ENCODE measurements at regions of chr10 and their contacts with region 1.

Region 1: DNA sequence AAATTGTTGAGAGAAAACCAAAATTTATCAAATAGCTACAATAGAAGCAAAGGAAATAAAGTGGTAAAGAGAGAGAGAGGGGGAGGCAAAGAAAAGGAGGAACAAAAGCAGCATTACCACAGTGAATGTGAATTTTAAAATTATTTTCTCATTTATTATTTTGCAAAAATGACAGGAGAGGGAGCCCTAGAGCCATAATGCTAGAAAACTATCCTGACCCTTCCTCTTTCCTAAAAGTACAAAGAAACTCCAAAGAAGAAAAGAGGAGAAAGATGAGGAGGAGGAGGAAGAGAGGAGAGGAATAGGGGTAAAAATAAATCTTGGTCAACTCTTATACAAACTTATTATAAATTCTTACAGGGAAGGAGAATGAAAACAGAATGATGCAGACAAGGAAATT is 921.5 kb downstream of the NRG3 start:
- DNase-seq: peak; percentile 2
- H3K4me3 ChIP-seq: no peak overlapping the region
- H3K27ac ChIP-seq: no peak overlapping the region
- H3K4me1 ChIP-seq: no peaks in the 10 kb centered on the region
- H3K27me3 ChIP-seq: no peaks in the 10 kb centered on the region
- CTCF ChIP-seq: peak; percentile 51

Region 2: DNA sequence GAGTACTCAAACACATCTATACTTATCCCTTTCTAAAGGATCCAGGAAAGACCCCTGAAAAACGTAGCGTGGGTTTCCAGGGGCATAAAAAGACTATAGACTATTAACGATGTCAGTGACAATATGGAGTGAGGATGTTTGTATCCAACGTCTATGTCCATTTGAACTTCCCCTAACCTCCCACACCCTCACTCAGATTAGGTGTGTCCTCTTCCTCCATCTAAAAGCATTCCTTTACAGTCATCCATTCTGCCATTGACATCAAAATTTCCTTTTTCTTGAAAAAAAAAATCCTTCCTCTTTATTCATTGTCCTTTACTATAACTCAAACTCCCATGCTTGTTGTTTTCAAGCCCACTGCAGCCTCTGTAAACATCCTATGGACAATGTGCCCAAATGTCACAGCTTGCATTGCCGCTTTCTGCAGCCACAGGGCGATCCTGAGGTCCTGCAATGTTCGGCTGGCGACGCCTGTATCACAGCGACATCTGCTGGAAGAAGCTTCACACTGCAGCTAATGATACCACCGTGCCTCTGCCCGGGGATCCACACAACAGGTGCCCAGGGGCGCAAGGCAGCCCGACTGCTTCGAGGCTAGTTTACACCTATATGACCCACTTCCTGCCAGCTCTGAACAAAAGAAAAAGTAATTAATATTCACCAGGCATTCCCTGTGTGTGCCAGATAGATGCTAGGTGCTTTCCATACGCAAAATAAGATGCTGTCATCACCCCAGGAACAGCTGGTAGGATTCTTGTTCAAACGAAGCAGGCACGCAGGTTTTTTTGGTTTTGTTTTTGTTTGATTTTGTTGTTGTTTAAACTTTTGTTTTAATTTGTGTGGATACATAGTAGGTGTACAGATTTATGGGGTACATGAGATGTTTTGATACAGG is 1074.9 kb after region 1 on chr10:
- CTCF ChIA-PET with region 1: no interaction called
- POLR2A ChIA-PET with region 1: no interaction called
- intact Hi-C with region 1: loop called (anchors 5 kb)
- DNase-seq: peak; percentile 78
- H3K4me3 ChIP-seq: no peak overlapping the region
- H3K27ac ChIP-seq: no peak overlapping the region
- H3K4me1 ChIP-seq: no peaks in the 10 kb centered on the region
- H3K27me3 ChIP-seq: no peaks in the 10 kb centered on the region
- CTCF ChIP-seq: peak; percentile 96

Region 3: DNA sequence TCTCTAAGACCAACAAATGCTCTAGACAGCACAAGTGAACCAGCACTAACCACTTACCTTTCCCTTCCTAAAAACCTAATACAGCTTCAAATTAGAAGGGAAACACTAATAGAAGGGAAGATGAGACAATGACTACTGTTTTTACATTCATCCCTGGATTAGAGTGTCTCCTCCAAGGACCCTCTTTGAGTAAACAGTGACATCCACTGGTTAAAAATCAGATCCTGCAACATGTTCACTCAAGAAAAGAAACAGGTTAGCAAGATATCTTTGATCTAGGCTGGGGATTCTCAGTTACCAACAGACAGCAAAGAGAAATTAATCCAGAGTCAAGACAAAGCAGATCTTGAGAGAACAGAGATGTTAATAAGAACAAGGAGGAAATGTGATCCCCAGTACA is 1165.1 kb after region 1 on chr10:
- CTCF ChIA-PET with region 1: no interaction called
- POLR2A ChIA-PET with region 1: no interaction called
- intact Hi-C with region 1: loop called (anchors 10 kb)
- DNase-seq: peak; percentile 16
- H3K4me3 ChIP-seq: no peak overlapping the region
- H3K27ac ChIP-seq: no peak overlapping the region
- H3K4me1 ChIP-seq: peaks cover 7% of the 10 kb centered on the region
- H3K27me3 ChIP-seq: no peaks in the 10 kb centered on the region
- CTCF ChIP-seq: peak; percentile 39; the same call in 1 of the 2 replicates

Measured in A673 (cell line).